Motor neuron (in vitro differentiated cells): ENCODE measurements at regions of chr9 and their contacts with region 1.

Region 1: DNA sequence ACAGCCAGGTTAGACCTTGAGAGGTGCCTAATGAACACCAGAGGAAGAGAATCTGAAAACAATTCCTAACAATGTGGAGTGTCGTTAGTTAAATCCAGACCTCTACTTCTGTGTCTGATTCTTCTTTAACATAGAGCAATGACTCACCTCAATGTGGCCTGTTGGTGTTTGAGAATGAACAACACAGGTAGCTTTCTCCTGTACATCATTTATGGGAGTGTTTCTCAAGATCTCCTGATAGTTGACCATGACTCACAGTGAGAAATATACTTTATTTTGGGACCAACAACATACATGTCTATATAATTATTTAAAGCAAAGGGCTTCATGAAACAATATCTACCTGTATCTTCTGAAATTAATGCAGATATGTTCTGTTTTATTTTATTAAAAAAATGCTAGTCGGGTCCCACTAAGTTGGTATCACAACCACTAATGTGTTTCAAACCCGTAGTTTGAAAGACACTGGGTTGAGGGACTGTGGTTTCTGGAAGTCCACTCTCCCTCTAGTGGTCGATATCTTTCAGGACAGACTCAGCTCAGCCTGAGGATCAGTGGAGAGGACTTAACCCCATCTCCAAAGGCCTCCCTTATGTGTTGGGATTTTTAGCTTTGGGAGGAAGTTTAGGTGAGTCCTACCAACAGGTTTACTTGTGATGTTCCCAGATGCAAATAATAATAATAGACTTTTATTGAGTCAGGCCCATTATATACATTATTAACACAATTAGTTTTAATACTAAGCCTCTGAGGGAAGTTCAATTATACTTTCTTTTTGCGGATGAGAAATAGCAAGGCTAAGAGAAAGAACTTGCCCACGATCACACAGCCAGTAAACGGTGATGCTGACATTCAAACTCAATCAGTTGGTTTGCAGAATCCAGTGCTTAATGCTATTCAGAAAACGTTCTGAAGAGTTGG is 70.0 kb upstream of the KLF9 start:
- ATAC-seq: peak in 7 of 8 experiments; percentile 46 to 89 (median 63)
- H3K4me3 ChIP-seq: no peak overlapping the region
- H3K27ac ChIP-seq: no peak overlapping the region
- H3K4me1 ChIP-seq: peaks cover 15 to 16% of the 10 kb centered on the region in 2 donors

Region 2: GRCh38 chr9:70352802-70353201 is 131.7 kb before region 1 on chr9:
- in situ Hi-C with region 1: loop called in 1 of 9 experiments (anchors 25 kb)
- ATAC-seq: no peak
- H3K4me3 ChIP-seq: no peak overlapping the region
- H3K27ac ChIP-seq: no peak overlapping the region
- H3K4me1 ChIP-seq: no peaks in the 10 kb centered on the region

Region 3: GRCh38 chr9:70398145-70398556 is 86.3 kb before region 1 on chr9:
- in situ Hi-C with region 1: loop called in 1 of 9 experiments (anchors 25 kb)
- ATAC-seq: peak in 3 of 8 experiments; percentile 6 to 15 (median 11)
- H3K4me3 ChIP-seq: no peak overlapping the region
- H3K27ac ChIP-seq: no peak overlapping the region
- H3K4me1 ChIP-seq: peaks cover under 1 to 2% of the 10 kb centered on the region in 2 donors

Region 4: DNA sequence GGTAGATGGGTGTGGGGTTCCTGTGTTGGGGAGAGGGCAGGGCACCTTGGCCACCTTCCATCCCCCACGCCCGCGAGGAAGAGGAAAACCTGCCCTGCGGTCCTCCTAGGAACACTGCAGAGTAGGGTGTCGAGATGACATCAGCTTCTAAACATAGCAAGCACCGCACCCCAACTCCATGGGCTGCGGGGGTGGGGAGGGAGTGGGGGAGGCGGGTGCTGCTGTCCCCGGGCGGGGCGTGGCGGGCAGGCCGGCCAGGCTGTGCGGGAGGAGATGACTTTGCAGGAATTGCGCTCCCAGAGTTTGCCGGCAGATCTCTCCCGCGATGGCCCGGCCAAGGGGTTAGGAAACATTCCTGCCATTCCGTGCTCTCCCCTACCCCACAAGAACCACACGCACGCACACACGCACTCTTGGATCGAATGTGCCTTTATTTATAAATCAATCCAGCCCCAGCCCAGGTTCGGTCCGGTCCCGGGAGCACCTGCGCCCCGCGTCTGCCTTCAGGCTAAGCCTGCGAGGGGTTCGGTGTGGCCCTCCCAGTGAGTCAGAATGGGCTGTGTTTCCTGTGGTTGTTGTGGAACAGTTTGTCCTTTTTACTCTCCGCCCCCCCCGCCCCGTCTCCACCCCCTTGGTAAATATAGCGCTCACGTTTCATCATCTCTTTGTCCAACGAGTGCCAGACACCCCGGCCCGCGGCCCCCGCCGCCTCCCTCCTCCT is 64.8 kb before region 1 on chr9:
- in situ Hi-C with region 1: loop called in 1 of 9 experiments (anchors 10 kb)
- ATAC-seq: peak; percentile 34 to 59 (median 42)
- H3K4me3 ChIP-seq: peak overlapping the region; percentile 28 to 50 (median 47)
- H3K27ac ChIP-seq: peak overlapping the region; percentile 75 to 89
- H3K4me1 ChIP-seq: peaks cover 8 to 13% of the 10 kb centered on the region in 2 donors

Region 5: GRCh38 chr9:70587201-70587600 is 102.7 kb after region 1 on chr9:
- in situ Hi-C with region 1: loop called in 1 of 9 experiments (anchors 25 kb)
- ATAC-seq: peak in 4 of 8 experiments; percentile 55 to 96 (median 84)
- H3K4me3 ChIP-seq: no peak overlapping the region
- H3K27ac ChIP-seq: no peak overlapping the region
- H3K4me1 ChIP-seq: no peaks in the 10 kb centered on the region

Region 6: GRCh38 chr9:71121275-71122021 is 637.0 kb after region 1 on chr9 and contains the start of gene TRPM3:
- in situ Hi-C with region 1: no loop called
- ATAC-seq: peak in 5 of 8 experiments; percentile 42 to 62 (median 44)
- H3K4me3 ChIP-seq: peak within 1 kb of the TSS; percentile 10 to 28 (median 22)
- H3K27ac ChIP-seq: no peak within 1 kb of the TSS
- H3K4me1 ChIP-seq: peaks cover 0 to 18% of the 10 kb centered on the region in 2 donors
- total RNA-seq, gene TRPM3: 0.09 to 2.3 (median 1.4) TPM